Activated T-helper 1 cell treated with anti-CD3 and anti-CD28 coated beads, Interleukin-12 subunit alpha, Interleukin-12 subunit beta, Interleukin-2, Interleukin-4 antibody, amounts not matched to agents 30 ng/mL and 10 ng/mL and 1 ng/mL, durations not matched to agents 14 hours and 24 hours and 36 hours (primary cell): ENCODE measurements at regions of chrX and their contacts with region 1.

Region 1: DNA sequence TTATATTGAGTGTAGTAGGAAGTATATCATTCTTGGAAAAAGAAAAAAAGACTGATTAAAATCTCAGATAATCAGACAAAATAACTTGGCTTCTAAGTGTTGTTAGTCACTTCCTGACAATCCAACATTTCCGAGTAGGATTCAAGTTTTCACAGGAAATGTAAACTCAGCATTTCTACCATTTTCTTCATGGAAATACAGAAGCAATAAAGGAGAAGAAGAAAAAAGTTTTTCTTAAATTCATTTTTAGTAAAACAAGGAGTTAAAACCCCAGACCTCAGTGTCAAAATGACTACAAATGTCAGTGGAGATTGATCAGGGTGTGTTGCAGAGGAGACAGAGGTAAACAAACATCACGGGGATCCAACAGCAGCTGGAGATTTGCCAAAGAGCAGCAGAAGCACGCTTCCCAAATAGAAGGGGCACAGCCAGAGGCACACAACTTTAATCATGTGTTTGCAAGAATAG is 129.3 kb upstream of the FAM9B start:
- DNase-seq: no peak
- H3K4me3 Mint-ChIP-seq: no peak overlapping the region
- H3K27ac Mint-ChIP-seq: no peak overlapping the region
- H3K4me1 Mint-ChIP-seq: peaks cover 25% of the 10 kb centered on the region
- H3K27me3 Mint-ChIP-seq: no peaks in the 10 kb centered on the region

Region 2: DNA sequence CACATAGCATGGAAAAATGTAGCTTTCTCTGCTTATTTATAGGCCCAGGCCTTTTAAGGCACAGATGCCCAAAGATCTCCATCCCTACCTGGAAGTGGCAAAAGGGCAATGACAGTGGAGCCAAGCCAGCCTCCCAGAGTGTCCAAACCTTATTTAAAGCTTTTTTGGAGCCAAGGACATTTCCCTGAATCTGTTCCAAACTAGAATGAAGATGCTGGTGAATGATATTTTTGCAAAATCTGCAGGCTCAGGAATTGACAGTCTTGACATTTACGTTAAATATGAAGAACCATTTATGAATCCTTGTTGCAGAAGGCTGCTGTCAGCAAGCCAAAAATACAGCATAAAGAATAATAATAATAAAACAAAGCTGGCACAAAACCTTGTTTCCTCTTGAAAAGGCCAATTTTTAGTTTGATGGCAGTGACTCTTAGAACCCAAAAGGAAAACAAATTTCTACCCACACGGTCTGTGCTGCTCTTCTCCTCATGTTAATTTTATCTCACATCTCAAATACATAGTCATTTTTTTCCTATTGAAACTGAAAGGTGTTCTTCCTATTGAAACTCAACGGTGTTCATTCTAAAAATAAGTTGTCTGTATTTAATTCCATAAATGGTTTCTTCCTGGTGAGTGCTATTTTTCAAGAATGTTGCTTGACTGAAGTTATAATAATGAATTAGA is 95.3 kb after region 1 on chrX:
- intact Hi-C with region 1: loop called (anchors 10 kb)
- DNase-seq: no peak
- H3K4me3 Mint-ChIP-seq: no peak overlapping the region
- H3K27ac Mint-ChIP-seq: peak overlapping the region; percentile 36
- H3K4me1 Mint-ChIP-seq: peaks cover 26% of the 10 kb centered on the region
- H3K27me3 Mint-ChIP-seq: no peaks in the 10 kb centered on the region